Heart right ventricle (tissue), 16 donors: ENCODE measurements at regions of chr6 and their contacts with region 1.

Region 1: GRCh38 chr6:5302995-5303622 is 41.8 kb downstream of the FARS2 start:
- DNase-seq: peak; percentile 22 to 23
- ATAC-seq: peak; percentile 11 to 92 (median 88)
- H3K4me3 ChIP-seq: no peak overlapping the region
- H3K27ac ChIP-seq: no peak overlapping the region
- H3K4me1 ChIP-seq: peaks cover 0 to 14% (median 0%) of the 10 kb centered on the region in 9 donors
- H3K27me3 ChIP-seq: no peaks in the 10 kb centered on the region
- CTCF ChIP-seq: peak; percentile 17 to 64 (median 56)

Region 2: DNA sequence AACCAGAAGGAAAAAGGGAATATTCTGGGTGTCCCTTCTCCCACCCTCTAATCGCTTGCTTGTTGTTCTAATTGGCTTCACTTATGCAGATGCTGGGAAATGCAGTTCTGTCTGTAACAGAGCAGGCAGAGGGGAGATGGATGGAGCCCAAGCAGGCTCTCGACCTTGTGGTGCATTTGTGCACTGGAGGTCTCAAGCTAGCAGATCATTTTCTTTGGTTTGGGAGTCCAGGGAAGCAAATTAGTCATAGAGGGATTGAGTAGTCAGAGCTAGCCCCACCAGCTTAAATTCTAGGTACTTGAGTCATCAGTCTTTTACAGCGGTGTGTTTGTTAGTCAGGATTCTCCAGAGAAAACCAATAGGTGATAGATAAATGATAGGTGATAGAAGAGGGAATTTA is 933.0 kb before region 1 on chr6:
- intact Hi-C with region 1: loop called in 1 of 10 experiments (anchors 5 kb)
- DNase-seq: no peak
- ATAC-seq: no peak
- H3K4me3 ChIP-seq: no peak overlapping the region
- H3K27ac ChIP-seq: peak overlapping the region in 9 of 10 donors; percentile 22 to 88 (median 79)
- H3K4me1 ChIP-seq: peaks cover 5 to 49% (median 32%) of the 10 kb centered on the region in 9 donors
- H3K27me3 ChIP-seq: no peaks in the 10 kb centered on the region
- CTCF ChIP-seq: no peak

Region 3: GRCh38 chr6:5214570-5215052 is 88.5 kb before region 1 on chr6:
- intact Hi-C with region 1: loop called in 4 of 10 experiments (anchors 1 to 10 kb)
- DNase-seq: peak; percentile 34 to 60
- ATAC-seq: peak; percentile 84 to 95 (median 92)
- H3K4me3 ChIP-seq: no peak overlapping the region
- H3K27ac ChIP-seq: peak overlapping the region in 6 of 10 donors; percentile 7 to 38 (median 30)
- H3K4me1 ChIP-seq: peaks cover 0 to 48% (median 16%) of the 10 kb centered on the region in 9 donors
- H3K27me3 ChIP-seq: no peaks in the 10 kb centered on the region
- CTCF ChIP-seq: peak; percentile 37 to 79 (median 70)

Region 4: GRCh38 chr6:5274231-5274630 is 28.9 kb before region 1 on chr6:
- intact Hi-C with region 1: loop called in 1 of 10 experiments (anchors 2 kb)
- DNase-seq: no peak
- ATAC-seq: no peak
- H3K4me3 ChIP-seq: no peak overlapping the region
- H3K27ac ChIP-seq: no peak overlapping the region
- H3K4me1 ChIP-seq: peaks cover 0 to 5% (median 0%) of the 10 kb centered on the region in 9 donors
- H3K27me3 ChIP-seq: no peaks in the 10 kb centered on the region
- CTCF ChIP-seq: no peak